Posterior vena cava (tissue), 2 donors: ENCODE measurements at regions of chr7 and their contacts with region 1.

Region 1: DNA sequence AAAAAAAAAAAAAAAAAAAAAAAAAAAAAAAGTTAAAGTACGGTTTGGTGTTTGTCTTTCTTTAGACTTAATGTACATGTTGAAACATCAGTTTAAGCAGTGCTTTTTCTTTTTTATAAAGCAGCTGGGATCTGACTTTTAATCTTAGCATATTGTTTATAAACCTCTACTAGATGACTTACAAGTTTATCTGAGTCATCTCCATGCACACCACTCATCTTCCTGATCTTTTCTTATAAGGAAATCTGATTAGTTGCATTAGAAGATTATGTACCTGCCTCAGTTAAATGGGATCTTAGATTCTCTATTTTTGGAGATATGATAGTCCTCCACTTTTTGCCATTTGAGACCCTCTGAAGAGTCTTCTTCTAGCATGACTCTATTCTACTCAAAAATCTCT is 391.9 kb upstream of the LRGUK start:
- DNase-seq: no peak

Region 2: DNA sequence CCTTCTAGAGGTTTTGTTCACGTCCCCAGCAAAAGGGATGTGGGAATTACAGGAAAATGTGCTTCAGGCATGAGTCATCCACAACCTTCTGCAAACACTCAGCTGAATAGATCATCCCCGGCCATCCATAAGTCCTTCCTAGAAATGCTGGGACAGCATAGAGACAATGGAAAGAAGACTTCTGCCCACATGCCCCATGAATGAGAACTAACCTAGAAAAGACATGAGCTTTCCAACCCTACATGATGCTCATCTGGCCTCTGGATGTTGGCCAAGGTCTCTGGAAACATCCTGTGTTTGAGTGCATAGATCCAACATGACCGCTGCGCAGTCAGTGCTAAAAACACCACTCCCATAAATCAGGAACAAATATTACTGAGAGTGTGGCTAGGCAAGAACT is 1436.4 kb before region 1 on chr7:
- intact Hi-C with region 1: loop called in 1 of 2 experiments (anchors 10 kb)
- DNase-seq: no peak

Region 3: DNA sequence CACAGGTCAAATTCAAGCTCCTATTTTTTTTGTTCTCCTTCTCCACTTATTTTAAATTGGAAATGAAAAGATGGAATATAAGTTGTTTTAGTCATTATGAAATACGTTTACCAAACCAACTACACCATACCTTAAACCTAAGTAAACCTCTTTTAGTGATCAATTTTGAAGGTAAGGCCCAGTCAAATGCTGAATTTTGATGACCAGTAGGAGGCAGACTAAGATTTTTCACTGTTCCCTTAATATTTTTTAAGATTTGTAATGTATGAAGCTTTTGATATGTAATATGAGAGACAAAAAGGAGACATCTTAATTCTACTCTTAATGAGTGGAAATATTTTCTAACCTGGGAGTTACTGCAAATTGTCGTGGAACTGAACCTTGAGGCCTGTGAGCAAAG is 170.7 kb before region 1 on chr7:
- intact Hi-C with region 1: no loop called
- DNase-seq: no peak

Region 4: GRCh38 chr7:133709036-133709880 is 26.0 kb before region 1 on chr7:
- intact Hi-C with region 1: no loop called
- DNase-seq: no peak